ENCODE measurements at regions of chr12 and their contacts with region 1.

Region 1: GRCh38 chr12:31589904-31590641 is 863 bp downstream of the DENND5B start:
- DNase-seq: peak; percentile 69 to 89 (median 85)
- ATAC-seq: peak; percentile 81 to 84
- H3K4me3 ChIP-seq: peak overlapping the region; percentile 99
- H3K27ac ChIP-seq: peak overlapping the region; percentile 99
- H3K4me1 ChIP-seq: no peaks in the 10 kb centered on the region
- H3K27me3 ChIP-seq: no peaks in the 10 kb centered on the region

Region 2: DNA sequence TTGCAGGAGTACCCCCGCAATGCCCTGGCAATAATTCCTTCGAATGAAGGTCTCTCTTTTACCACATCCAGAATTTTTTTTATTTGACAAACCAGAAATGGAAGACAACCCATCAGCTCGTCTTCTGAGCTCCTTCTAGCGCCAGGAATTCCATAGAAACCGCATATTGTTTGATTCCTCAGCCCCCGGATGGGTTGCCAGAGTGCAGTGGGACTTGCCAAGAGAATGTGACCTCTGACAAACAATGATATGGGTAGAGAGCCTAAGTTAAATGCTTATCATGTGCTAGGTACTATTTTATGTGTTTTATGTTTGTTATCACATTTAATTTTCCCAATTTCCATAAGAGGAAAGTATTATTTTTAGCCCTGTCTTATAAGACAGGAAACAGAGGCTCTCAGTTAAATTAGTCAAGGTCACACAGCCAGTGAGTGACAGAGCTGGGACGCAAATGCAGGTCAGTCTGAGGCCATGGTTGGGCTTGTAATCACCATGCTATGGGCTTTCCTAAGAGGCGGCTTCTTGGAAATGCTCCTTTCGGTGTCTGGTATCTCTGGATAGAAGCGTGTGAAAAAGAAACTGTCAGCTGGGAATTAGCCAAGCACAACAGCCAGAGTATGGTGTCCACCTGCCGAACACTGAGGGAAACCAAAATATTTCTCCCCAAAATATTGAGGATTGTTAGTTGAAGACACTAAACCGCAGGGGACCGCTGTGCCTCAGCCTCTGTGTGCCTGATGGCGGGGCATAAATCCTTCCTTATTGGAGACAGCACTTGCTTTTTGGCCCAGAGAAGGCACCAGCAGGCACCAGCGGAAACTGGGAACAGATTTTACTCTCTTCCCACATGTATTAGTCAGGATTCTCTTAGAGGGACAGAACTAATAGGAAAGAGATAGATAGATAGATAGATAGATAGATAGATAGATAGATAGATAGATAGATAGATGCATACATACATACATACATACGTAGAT is 40.0 kb after region 1 on chr12:
- intact Hi-C with region 1: loop called in 1 of 4 experiments (anchors 5 kb)
- DNase-seq: peak; percentile 37 to 61 (median 59)
- ATAC-seq: peak; percentile 87 to 94
- H3K4me3 ChIP-seq: no peak overlapping the region
- H3K27ac ChIP-seq: no peak overlapping the region
- H3K4me1 ChIP-seq: peaks cover 2% of the 10 kb centered on the region
- H3K27me3 ChIP-seq: no peaks in the 10 kb centered on the region

Region 3: GRCh38 chr12:31682136-31682962 is 92.3 kb after region 1 on chr12:
- intact Hi-C with region 1: no loop called
- DNase-seq: peak in 1 of 3 donors; percentile 28
- ATAC-seq: peak; percentile 65 to 82
- H3K4me3 ChIP-seq: no peak overlapping the region
- H3K27ac ChIP-seq: no peak overlapping the region
- H3K4me1 ChIP-seq: no peaks in the 10 kb centered on the region
- H3K27me3 ChIP-seq: no peaks in the 10 kb centered on the region

Region 4: GRCh38 chr12:31797230-31797872 is 207.3 kb after region 1 on chr12:
- intact Hi-C with region 1: no loop called
- DNase-seq: no peak
- ATAC-seq: no peak
- H3K4me3 ChIP-seq: no peak overlapping the region
- H3K27ac ChIP-seq: no peak overlapping the region
- H3K4me1 ChIP-seq: no peaks in the 10 kb centered on the region
- H3K27me3 ChIP-seq: no peaks in the 10 kb centered on the region

Region 5: GRCh38 chr12:31896514-31897039 is 306.5 kb after region 1 on chr12:
- intact Hi-C with region 1: no loop called
- DNase-seq: peak in 1 of 3 donors; percentile 42
- ATAC-seq: peak; percentile 80 to 90
- H3K4me3 ChIP-seq: no peak overlapping the region
- H3K27ac ChIP-seq: no peak overlapping the region
- H3K4me1 ChIP-seq: no peaks in the 10 kb centered on the region
- H3K27me3 ChIP-seq: no peaks in the 10 kb centered on the region